ENCODE measurements at regions of chr17 and their contacts with region 1.

Region 1: GRCh38 chr17:27339836-27340550 is 46.1 kb downstream of the WSB1 start:
- DNase-seq: no peak
- ATAC-seq: peak; percentile 53
- H3K4me3 Mint-ChIP-seq: no peak overlapping the region
- H3K27ac Mint-ChIP-seq: peak overlapping the region; percentile 3
- H3K4me1 Mint-ChIP-seq: peaks cover 51% of the 10 kb centered on the region
- H3K27me3 Mint-ChIP-seq: no peaks in the 10 kb centered on the region
- CTCF ChIP-seq: no peak

Region 2: DNA sequence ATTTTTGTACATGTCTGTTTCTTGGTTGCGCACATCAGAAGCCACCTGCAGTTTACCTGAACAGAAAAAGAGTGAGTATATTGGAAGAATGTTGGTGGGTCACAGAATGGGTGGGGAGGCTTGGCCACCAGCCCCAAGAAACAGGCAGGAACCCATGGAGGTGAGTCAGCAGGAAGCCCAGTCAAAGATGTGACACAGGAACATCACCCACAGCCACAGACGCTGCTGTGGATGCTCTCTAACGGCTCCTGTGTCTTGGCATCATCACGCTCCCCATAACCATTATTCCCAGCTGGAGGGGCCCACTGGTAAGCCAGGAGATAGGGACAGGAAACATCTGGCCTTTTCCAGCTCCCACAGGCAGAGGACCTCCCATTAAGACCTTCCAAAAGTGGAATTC is 140.0 kb before region 1 on chr17:
- CTCF ChIA-PET with region 1: interaction called, 30 read pairs
- POLR2A ChIA-PET with region 1: no interaction called
- intact Hi-C with region 1: loop called (anchors 5 kb)
- DNase-seq: no peak
- ATAC-seq: no peak
- H3K4me3 Mint-ChIP-seq: no peak overlapping the region
- H3K27ac Mint-ChIP-seq: no peak overlapping the region
- H3K4me1 Mint-ChIP-seq: no peaks in the 10 kb centered on the region
- H3K27me3 Mint-ChIP-seq: no peaks in the 10 kb centered on the region
- CTCF ChIP-seq: no peak

Measured in activated B cell treated with CpG ODN at 0.5 μM for 24 hours (primary cell).